ENCODE measurements at regions of chr1 and their contacts with region 1.

Region 1: GRCh38 chr1:223845810-223846682 is at the start of gene TP53BP2:
- DNase-seq: peak; percentile 88
- ATAC-seq: peak; percentile 84
- H3K4me3 Mint-ChIP-seq: peak within 1 kb of the TSS; percentile 97
- H3K27ac Mint-ChIP-seq: peak within 1 kb of the TSS; percentile 99
- H3K4me1 Mint-ChIP-seq: peaks cover 37% of the 10 kb centered on the region
- H3K27me3 Mint-ChIP-seq: no peaks in the 10 kb centered on the region
- CTCF ChIP-seq: peak; percentile 29
- total RNA-seq, gene TP53BP2: 28.3 to 34.5 TPM

Region 2: DNA sequence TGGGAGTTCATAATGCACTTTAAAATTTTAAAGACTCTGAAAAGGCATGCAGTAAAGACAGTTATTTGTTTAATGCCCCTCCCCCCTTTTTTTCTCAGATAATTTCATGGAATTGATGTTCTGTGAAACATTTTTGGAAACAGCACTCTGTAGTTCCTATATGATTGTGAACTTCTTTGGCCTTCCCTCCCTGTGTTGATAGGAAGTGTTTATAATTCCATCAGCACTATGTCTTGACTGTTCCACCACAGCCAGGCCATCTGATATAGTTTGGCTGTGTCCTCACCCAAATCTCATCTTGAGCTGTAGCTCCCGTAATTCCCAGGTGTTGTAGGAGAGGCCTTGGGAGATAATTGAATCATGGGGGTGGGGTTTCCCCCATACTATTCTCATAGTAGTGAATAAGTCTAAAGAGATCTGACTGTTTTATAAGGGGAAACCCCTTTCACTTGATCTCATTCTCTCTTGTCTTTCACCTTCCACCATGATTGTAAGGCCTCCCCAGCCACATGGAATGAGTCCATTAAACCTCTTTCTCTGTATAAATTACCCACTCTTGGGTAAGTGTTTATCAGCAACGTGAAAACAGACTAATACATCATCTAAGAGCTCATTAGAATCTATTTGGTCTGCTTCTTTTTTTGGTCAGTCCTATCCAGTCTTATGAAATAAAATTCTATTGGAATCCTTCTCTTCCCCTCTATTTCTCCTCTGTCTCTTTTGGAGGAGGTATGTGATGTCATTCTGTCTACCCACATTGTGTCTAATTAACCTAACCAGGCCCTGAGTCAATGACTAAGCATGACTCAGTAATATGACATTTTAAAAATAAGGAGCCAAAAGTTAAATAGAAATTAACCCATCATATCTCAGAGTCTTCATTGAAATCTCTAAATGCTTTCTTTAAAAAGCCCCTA is 443.9 kb before region 1 on chr1:
- CTCF ChIA-PET with region 1: no interaction called
- POLR2A ChIA-PET with region 1: no interaction called
- intact Hi-C with region 1: no loop called
- DNase-seq: no peak
- ATAC-seq: peak; percentile 77
- H3K4me3 Mint-ChIP-seq: no peak overlapping the region
- H3K27ac Mint-ChIP-seq: no peak overlapping the region
- H3K4me1 Mint-ChIP-seq: peaks cover 22% of the 10 kb centered on the region
- H3K27me3 Mint-ChIP-seq: peaks cover 4% of the 10 kb centered on the region
- CTCF ChIP-seq: no peak

Region 3: DNA sequence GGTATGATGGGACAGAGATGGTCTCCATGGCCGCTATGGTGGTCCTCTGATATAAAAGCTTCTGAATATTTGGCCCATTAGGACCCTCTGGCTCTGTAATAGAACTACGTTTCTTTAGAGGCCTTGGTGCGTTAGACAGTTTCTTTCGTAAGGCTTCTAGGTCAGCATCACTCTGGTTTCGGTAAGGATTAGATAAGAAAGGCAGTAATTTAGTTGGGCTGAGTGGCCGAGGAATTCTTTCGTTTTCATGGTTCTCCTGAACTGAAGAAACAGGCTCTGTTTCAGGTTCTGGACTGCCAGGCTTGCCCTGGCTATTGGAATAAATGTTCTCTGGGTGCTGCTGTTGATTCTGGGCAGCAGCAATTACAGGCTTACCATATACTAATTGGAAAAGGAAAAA is 49.8 kb before region 1 on chr1:
- CTCF ChIA-PET with region 1: no interaction called
- POLR2A ChIA-PET with region 1: no interaction called
- intact Hi-C with region 1: no loop called
- DNase-seq: no peak
- ATAC-seq: no peak
- H3K4me3 Mint-ChIP-seq: no peak overlapping the region
- H3K27ac Mint-ChIP-seq: no peak overlapping the region
- H3K4me1 Mint-ChIP-seq: no peaks in the 10 kb centered on the region
- H3K27me3 Mint-ChIP-seq: no peaks in the 10 kb centered on the region
- CTCF ChIP-seq: no peak

Region 4: GRCh38 chr1:223811634-223812415 is 34.2 kb before region 1 on chr1:
- CTCF ChIA-PET with region 1: interaction called, 22 read pairs
- POLR2A ChIA-PET with region 1: interaction called, 8 read pairs
- intact Hi-C with region 1: no loop called
- DNase-seq: no peak
- ATAC-seq: peak; percentile 66
- H3K4me3 Mint-ChIP-seq: no peak overlapping the region
- H3K27ac Mint-ChIP-seq: no peak overlapping the region
- H3K4me1 Mint-ChIP-seq: peaks cover 29% of the 10 kb centered on the region
- H3K27me3 Mint-ChIP-seq: no peaks in the 10 kb centered on the region
- CTCF ChIP-seq: peak; percentile 70

Region 5: DNA sequence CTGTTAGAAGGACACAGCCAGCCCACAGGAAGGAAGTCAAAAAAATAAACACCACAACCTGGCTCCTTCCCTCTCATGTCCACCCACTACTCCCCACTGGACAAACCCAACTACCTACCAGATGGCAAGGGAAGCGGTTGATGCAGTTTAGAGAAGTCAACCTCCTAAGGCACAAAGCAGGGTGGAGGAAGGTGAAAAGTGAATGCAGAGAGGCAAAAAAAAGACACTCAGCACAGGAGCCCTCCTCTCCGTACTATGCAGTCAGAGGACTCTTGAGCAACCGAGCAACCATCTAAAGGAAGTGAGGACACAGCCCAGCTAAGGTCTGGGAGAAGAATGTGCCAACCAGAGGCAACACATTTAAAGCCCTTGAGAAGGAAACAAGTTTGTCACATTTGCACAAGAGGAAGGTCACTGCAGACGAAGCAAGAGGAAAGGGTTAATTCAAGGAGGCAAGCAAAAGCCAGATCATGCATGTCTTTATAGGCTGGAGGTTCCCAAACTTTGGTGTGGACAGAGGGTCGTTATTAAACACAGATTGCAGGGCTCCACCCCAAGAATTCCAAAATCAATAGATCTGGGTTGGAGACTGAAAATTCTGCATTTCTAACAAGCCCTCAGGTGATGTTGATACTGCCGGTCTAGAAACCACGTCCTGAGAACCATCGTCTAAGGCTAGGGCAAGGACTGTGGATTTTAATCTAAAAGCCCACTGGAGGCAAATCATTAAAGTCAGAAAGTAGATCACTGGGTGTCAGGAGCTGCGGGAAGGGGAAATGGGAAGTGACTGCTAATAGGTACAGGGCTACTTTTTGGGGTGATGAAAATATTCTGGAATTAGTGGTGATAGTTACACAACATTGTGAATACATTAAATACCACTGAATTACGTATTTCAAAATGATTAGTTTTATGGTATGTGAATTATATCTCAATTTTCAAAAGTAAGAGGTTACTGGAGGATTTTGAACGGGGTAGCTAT is 20.0 kb before region 1 on chr1:
- CTCF ChIA-PET with region 1: interaction called, 9 read pairs
- POLR2A ChIA-PET with region 1: interaction called, 22 read pairs
- intact Hi-C with region 1: no loop called
- DNase-seq: no peak
- ATAC-seq: peak; percentile 63
- H3K4me3 Mint-ChIP-seq: peak overlapping the region; percentile 4
- H3K27ac Mint-ChIP-seq: peak overlapping the region; percentile 39
- H3K4me1 Mint-ChIP-seq: peaks cover 63% of the 10 kb centered on the region
- H3K27me3 Mint-ChIP-seq: no peaks in the 10 kb centered on the region
- CTCF ChIP-seq: no peak

Region 6: DNA sequence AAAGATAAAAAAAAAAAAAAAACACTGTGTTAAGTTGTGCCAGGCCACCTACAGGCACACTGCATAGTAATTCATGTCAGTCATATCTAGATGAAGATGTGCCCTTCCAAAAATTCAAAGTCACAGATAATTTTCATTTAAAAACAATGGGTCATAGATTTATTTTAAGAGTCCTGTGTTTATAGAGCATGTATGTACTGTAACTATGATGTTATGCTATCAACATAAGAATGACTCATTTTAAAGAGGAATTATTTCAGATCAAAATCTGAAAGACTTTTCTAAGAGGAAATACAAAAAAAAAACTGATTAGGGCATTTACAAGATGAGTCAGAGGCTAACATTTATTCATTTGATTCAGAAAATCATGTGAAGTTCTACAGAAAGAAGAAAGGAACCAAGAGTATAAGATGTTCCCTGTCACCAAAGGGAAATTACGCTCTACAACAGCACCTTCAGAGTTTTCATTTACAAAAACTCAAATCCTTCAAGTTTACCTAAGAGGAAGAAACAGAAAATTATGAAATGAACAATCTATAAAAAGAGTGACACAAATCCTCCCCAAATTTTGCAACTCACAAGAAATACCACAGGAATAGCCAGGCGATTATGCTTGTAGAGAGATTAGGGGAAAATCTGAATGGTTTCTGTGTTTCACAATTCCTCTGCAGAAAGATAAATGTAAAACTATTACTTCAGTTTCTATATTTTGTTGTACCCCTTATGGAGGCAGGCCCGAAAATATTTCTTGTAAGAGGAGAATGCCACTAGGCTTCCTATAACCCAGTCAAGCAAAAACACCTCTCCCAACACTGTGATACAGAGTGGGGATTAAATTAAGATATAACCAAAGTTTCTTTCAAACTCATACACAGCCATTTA is 14.1 kb before region 1 on chr1:
- CTCF ChIA-PET with region 1: interaction called, 11 read pairs
- POLR2A ChIA-PET with region 1: interaction called, 83 read pairs
- intact Hi-C with region 1: no loop called
- DNase-seq: no peak
- ATAC-seq: peak; percentile 69
- H3K4me3 Mint-ChIP-seq: peak overlapping the region; percentile 66
- H3K27ac Mint-ChIP-seq: peak overlapping the region; percentile 97
- H3K4me1 Mint-ChIP-seq: peaks cover 22% of the 10 kb centered on the region
- H3K27me3 Mint-ChIP-seq: no peaks in the 10 kb centered on the region
- CTCF ChIP-seq: no peak

Region 7: GRCh38 chr1:223870617-223871574 is 24.9 kb after region 1 on chr1:
- CTCF ChIA-PET with region 1: no interaction called
- POLR2A ChIA-PET with region 1: no interaction called
- intact Hi-C with region 1: no loop called
- DNase-seq: no peak
- ATAC-seq: no peak
- H3K4me3 Mint-ChIP-seq: no peak overlapping the region
- H3K27ac Mint-ChIP-seq: no peak overlapping the region
- H3K4me1 Mint-ChIP-seq: no peaks in the 10 kb centered on the region
- H3K27me3 Mint-ChIP-seq: peaks cover 24% of the 10 kb centered on the region
- CTCF ChIP-seq: no peak

Region 8: DNA sequence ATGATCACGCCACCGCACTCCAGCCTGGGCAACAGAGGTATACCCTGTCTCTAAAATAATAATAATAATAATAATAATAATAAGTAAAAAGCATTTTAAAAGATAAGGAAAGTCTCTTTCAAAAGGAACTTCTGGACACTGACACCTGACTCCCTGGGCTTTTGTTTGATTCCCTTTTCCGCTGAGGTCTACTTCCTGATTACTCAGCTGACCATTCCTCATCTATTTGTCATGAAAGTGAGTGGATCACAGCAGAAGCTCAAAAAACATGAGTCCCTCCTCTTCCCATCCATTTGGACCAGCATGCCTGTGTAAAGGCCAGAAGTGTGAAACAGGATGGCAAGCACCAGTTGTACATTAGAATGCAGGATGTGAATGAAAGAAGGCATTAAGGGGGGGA is 206.7 kb after region 1 on chr1:
- CTCF ChIA-PET with region 1: no interaction called
- POLR2A ChIA-PET with region 1: no interaction called
- intact Hi-C with region 1: no loop called
- DNase-seq: no peak
- ATAC-seq: no peak
- H3K4me3 Mint-ChIP-seq: no peak overlapping the region
- H3K27ac Mint-ChIP-seq: no peak overlapping the region
- H3K4me1 Mint-ChIP-seq: no peaks in the 10 kb centered on the region
- H3K27me3 Mint-ChIP-seq: peaks cover 3% of the 10 kb centered on the region
- CTCF ChIP-seq: no peak

Measured in activated CD8-positive, alpha-beta T cell treated with anti-CD3 and anti-CD28 coated beads for 36 hours (primary cell).